ENCODE measurements at regions of chr16 and their contacts with region 1.

Region 1: GRCh38 chr16:4116337-4117249 is at the start of gene ADCY9:
- DNase-seq: peak; percentile 86
- H3K4me3 Mint-ChIP-seq: peak within 1 kb of the TSS; percentile 62
- H3K27ac Mint-ChIP-seq: peak within 1 kb of the TSS; percentile 55
- H3K4me1 Mint-ChIP-seq: peaks cover 13% of the 10 kb centered on the region
- H3K27me3 Mint-ChIP-seq: no peaks in the 10 kb centered on the region
- CTCF ChIP-seq: no peak
- total RNA-seq, gene ADCY9: 7.1 and 8.2 TPM in 2 replicates

Region 2: DNA sequence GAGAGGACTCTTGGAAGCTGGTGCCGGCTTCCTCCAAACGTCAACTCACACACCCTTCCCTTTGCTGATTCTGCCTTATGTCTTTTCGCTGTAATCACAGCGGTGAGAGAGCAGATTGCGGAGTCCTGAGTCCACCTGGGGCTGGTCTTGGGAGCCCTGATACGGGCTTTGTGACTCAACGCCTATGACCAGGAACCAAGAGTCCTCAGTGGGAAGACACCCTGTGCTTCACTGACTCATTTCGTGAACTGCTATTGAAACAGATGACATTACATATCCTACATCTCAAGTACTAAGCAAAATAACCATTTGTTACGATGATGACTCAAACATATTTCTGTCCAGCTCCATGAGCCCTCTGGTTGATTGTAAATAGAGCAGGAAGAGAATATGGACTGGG is 145.3 kb before region 1 on chr16:
- CTCF ChIA-PET with region 1: no interaction called
- intact Hi-C with region 1: no loop called
- DNase-seq: no peak
- H3K4me3 Mint-ChIP-seq: no peak overlapping the region
- H3K27ac Mint-ChIP-seq: no peak overlapping the region
- H3K4me1 Mint-ChIP-seq: no peaks in the 10 kb centered on the region
- H3K27me3 Mint-ChIP-seq: no peaks in the 10 kb centered on the region
- CTCF ChIP-seq: no peak

Region 3: GRCh38 chr16:3983081-3983520 is 133.5 kb before region 1 on chr16:
- CTCF ChIA-PET with region 1: interaction called, 8 read pairs
- intact Hi-C with region 1: loop called (anchors 10 kb)
- DNase-seq: peak; percentile 92
- H3K4me3 Mint-ChIP-seq: peak overlapping the region; percentile 46
- H3K27ac Mint-ChIP-seq: no peak overlapping the region
- H3K4me1 Mint-ChIP-seq: peaks cover 18% of the 10 kb centered on the region
- H3K27me3 Mint-ChIP-seq: no peaks in the 10 kb centered on the region
- CTCF ChIP-seq: peak; percentile 86

Region 4: DNA sequence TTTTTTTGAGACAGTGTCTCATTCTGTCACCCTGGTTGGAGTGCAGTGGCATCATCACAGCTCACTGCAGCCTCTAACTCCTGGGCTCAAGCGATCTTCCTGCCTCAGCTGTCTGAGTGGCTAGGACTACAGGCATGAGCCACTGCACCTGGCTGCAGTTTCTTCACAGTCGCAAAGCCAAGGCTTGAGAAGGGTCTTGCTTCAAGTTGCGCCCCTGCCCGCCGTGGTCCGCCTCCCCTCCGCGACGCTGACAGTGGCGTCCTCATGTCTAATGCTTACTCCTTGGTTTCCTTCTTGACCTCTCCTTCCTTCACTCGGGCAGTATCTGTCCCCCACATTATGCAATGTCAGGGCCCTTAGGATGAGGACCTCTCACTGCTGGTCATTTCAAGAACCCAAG is 113.0 kb before region 1 on chr16:
- CTCF ChIA-PET with region 1: no interaction called
- intact Hi-C with region 1: no loop called
- DNase-seq: no peak
- H3K4me3 Mint-ChIP-seq: no peak overlapping the region
- H3K27ac Mint-ChIP-seq: no peak overlapping the region
- H3K4me1 Mint-ChIP-seq: no peaks in the 10 kb centered on the region
- H3K27me3 Mint-ChIP-seq: no peaks in the 10 kb centered on the region
- CTCF ChIP-seq: no peak

Measured in Calu3 (cell line).